Transverse colon (tissue), 4 donors: ENCODE measurements at regions of chr1 and their contacts with region 1.

Region 1: GRCh38 chr1:22689505-22689904 is 21.1 kb upstream of the EPHB2 start:
- DNase-seq: no peak
- H3K4me3 ChIP-seq: no peak overlapping the region
- H3K27ac ChIP-seq: no peak overlapping the region
- H3K4me1 ChIP-seq: no peaks in the 10 kb centered on the region
- H3K27me3 ChIP-seq: peaks cover 6% of the 10 kb centered on the region
- CTCF ChIP-seq: no peak
- EP300 ChIP-seq: no peak
- POLR2A ChIP-seq: no peak

Region 2: DNA sequence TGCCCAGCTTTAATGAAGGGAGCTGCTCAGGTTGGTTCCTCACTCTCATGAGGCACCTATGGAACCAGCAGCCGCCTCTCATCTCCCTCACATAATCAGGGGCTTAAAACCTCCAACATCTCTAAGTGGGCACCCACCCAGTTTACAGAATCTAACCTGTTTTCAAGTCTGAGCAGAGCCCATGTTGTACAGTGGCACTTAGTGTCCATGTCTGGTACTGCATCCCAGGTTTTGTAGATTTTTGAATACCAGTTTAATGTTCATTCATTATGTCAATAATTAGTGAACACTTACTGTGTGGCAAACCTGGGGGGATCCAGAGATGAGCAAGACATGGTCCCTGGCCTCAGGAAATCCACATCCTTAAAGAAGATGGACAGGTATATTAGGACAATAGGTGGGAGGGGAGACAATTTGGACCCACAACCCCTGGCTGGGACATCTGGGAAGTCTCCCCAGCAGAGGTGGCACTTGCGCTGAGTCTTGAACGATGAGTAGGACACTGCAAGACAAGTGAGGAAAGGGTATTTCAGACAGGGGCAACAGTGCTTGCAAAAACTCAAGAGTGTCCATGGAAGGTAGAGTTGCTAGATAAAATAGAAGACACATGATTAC is 199.8 kb after region 1 on chr1:
- in situ Hi-C with region 1: loop called in 2 of 4 experiments (anchors 25 kb)
- intact Hi-C with region 1: no loop called
- DNase-seq: no peak
- H3K4me3 ChIP-seq: no peak overlapping the region
- H3K27ac ChIP-seq: no peak overlapping the region
- H3K4me1 ChIP-seq: no peaks in the 10 kb centered on the region
- H3K27me3 ChIP-seq: no peaks in the 10 kb centered on the region
- CTCF ChIP-seq: peak; percentile 59 to 76 (median 70)
- EP300 ChIP-seq: no peak
- POLR2A ChIP-seq: no peak